ENCODE measurements at regions of chr17 and their contacts with region 1.

Region 1: DNA sequence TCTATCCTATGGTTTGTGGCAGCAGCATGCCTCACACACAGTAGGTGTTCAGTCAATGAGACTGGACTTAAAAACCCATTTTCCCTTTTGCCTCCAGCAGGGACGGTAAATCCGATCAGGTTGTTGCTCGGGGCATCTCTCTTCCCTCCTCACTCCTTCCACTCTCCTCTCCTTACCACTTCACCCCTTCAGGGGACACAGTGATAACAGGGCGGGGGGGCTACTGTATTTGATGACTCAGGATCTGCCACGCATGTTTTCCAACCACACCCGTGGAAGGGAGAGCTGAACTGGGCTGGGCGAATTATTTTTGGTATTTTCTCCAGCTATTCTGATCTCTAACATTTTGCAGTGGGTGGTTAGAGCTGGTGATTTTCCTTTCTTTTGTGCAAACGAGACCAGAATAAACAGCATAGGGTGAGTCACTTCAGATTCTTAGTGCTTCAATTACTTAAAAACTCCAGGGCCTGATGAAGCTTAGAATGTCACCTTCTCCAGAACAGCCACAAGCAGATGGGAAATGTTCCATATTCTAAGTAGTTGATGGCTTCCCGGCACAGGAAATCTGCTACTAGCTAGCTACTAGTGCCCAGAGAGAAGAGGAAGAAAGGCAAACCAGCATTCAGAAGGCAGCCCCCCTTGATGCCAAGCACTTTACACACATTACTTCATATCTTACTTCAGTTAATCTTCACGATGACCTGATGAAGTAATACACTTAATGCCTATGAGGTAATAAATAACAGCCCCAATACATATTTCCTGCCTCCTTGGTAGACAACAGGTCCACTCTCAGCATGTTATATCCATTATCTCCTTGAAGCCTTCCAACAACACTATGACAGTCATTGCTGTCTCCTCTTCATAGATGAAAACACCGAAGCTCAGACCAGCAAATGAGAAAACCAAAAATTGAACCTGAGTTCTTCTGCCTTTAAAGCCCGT is 74.2 kb downstream of the ASIC2 start:
- DNase-seq: no peak
- ATAC-seq: peak; percentile 37
- H3K4me3 ChIP-seq: no peak overlapping the region
- H3K27ac ChIP-seq: peak overlapping the region; percentile 52 to 91
- H3K4me1 ChIP-seq: peaks cover 0 to 2% of the 10 kb centered on the region in 2 donors
- H3K27me3 ChIP-seq: no peaks in the 10 kb centered on the region

Region 2: GRCh38 chr17:32627239-32627996 is 591.5 kb before region 1 on chr17:
- intact Hi-C with region 1: no loop called
- DNase-seq: no peak
- ATAC-seq: no peak
- H3K4me3 ChIP-seq: no peak overlapping the region
- H3K27ac ChIP-seq: no peak overlapping the region
- H3K4me1 ChIP-seq: no peaks in the 10 kb centered on the region
- H3K27me3 ChIP-seq: no peaks in the 10 kb centered on the region

Region 3: GRCh38 chr17:33142705-33143299 is 76.1 kb before region 1 on chr17:
- intact Hi-C with region 1: loop called in 1 of 2 experiments (anchors 2 kb)
- DNase-seq: no peak
- ATAC-seq: no peak
- H3K4me3 ChIP-seq: no peak overlapping the region
- H3K27ac ChIP-seq: no peak overlapping the region
- H3K4me1 ChIP-seq: no peaks in the 10 kb centered on the region
- H3K27me3 ChIP-seq: no peaks in the 10 kb centered on the region

Region 4: GRCh38 chr17:33277436-33278100 is 58.6 kb after region 1 on chr17:
- intact Hi-C with region 1: no loop called
- DNase-seq: no peak
- ATAC-seq: no peak
- H3K4me3 ChIP-seq: no peak overlapping the region
- H3K27ac ChIP-seq: no peak overlapping the region
- H3K4me1 ChIP-seq: no peaks in the 10 kb centered on the region
- H3K27me3 ChIP-seq: no peaks in the 10 kb centered on the region

Measured in aorta (tissue), 5 donors.